Naive thymus-derived CD4-positive, alpha-beta T cell (primary cell): ENCODE measurements at regions of chr4 and their contacts with region 1.

Region 1: DNA sequence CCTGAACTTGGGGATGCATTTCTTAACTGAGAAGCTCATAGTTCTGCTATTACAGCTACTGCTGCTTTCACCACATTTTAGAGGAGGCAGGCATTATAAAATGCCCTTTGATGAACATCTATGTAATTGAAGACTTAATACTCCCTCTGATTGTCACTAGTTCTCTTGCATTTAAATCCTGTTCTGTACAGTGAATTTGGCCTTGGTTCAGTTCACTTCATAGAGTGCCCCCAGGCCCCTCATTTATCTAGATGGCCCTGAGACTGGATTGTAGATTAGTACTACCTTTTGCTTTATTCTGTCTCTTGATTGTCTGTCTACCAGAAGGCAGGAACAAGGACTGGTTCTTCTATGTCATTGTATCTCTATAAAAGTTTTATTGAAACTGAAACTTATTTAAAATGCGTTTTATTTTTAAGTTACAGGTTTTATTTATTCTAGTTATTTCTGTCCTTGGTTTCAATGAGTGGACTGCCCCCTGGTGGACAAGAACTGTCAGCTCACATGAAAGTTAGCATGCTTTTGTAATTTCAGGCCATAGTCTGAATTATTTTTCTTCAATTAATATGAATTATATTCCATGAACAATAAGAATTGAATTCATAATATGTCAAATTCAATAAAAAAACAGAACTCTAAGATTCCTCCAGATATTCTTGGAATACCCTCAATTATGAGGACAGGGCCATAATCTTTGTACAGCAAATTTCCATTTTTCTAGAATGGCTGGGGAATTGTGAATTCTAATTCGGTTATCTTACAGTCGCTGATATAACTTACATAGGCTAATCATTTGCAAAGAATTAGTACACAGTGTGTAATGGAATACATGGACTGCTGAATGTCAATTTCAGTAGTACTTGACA is 47.2 kb upstream of the TMEM33 start:
- DNase-seq: peak in 4 of 9 donors; percentile 22 to 39 (median 29)
- ATAC-seq: no peak
- H3K4me3 ChIP-seq: no peak overlapping the region
- H3K4me3 Mint-ChIP-seq: no peak overlapping the region
- H3K27ac ChIP-seq: no peak overlapping the region
- H3K27ac Mint-ChIP-seq: no peak overlapping the region
- H3K4me1 ChIP-seq: no peaks in the 10 kb centered on the region
- H3K4me1 Mint-ChIP-seq: peaks cover 0 to under 1% (median 0%) of the 10 kb centered on the region in 7 donors
- H3K27me3 ChIP-seq: no peaks in the 10 kb centered on the region
- H3K27me3 Mint-ChIP-seq: peaks cover 24 to 49% (median 31%) of the 10 kb centered on the region in 5 donors

Region 2: GRCh38 chr4:41281038-41281634 is 606.9 kb before region 1 on chr4:
- CTCF ChIA-PET with region 1: interaction called, 3 read pairs
- POLR2A ChIA-PET with region 1: no interaction called
- intact Hi-C with region 1: loop called in 1 of 2 experiments (anchors 1 kb)
- DNase-seq: peak in 5 of 9 donors; percentile 26 to 53 (median 40)
- ATAC-seq: peak; percentile 82
- H3K4me3 ChIP-seq: no peak overlapping the region
- H3K4me3 Mint-ChIP-seq: no peak overlapping the region
- H3K27ac ChIP-seq: no peak overlapping the region
- H3K27ac Mint-ChIP-seq: no peak overlapping the region
- H3K4me1 ChIP-seq: no peaks in the 10 kb centered on the region
- H3K4me1 Mint-ChIP-seq: no peaks in the 10 kb centered on the region
- H3K27me3 ChIP-seq: no peaks in the 10 kb centered on the region
- H3K27me3 Mint-ChIP-seq: peaks cover 0 to 33% (median 10%) of the 10 kb centered on the region in 5 donors

Region 3: DNA sequence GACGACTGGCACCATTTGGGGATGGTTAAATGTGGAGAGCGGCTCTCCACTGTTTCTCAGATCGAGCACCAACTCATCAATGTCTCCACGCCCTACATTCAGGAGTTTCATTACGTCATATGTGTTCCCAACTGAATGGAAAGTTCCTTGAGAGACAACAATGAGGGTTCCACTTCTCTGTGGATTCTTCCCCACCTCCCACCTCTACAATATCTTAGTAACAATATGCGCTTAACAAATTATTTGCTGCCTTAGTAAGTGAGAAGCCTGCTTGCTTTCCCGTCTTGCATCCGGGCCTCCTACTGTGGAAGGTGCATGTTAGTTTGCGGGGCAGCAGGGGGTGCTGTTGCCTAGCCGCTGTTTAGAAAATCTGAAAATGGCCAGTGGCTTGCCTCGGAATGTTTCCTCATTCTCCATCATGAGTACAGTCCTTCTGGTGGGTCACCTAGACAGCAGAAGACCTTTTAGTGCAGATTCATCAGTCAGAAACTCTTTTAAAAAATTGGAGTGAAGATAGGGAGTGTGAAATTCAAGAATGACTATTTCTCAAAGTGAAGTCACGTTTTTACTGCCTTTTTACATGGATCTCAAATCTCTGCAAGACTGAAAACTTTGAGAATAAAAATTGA is 195.2 kb before region 1 on chr4:
- CTCF ChIA-PET with region 1: no interaction called
- POLR2A ChIA-PET with region 1: no interaction called
- intact Hi-C with region 1: loop called (anchors 1 kb)
- DNase-seq: peak in 1 of 9 donors; percentile 22
- ATAC-seq: no peak
- H3K4me3 ChIP-seq: no peak overlapping the region
- H3K4me3 Mint-ChIP-seq: no peak overlapping the region
- H3K27ac ChIP-seq: no peak overlapping the region
- H3K27ac Mint-ChIP-seq: no peak overlapping the region
- H3K4me1 ChIP-seq: no peaks in the 10 kb centered on the region
- H3K4me1 Mint-ChIP-seq: no peaks in the 10 kb centered on the region
- H3K27me3 ChIP-seq: no peaks in the 10 kb centered on the region
- H3K27me3 Mint-ChIP-seq: peaks cover 0 to 20% (median 0%) of the 10 kb centered on the region in 5 donors